PC-3 (cell line): ENCODE measurements at regions of chr14 and their contacts with region 1.

Region 1: DNA sequence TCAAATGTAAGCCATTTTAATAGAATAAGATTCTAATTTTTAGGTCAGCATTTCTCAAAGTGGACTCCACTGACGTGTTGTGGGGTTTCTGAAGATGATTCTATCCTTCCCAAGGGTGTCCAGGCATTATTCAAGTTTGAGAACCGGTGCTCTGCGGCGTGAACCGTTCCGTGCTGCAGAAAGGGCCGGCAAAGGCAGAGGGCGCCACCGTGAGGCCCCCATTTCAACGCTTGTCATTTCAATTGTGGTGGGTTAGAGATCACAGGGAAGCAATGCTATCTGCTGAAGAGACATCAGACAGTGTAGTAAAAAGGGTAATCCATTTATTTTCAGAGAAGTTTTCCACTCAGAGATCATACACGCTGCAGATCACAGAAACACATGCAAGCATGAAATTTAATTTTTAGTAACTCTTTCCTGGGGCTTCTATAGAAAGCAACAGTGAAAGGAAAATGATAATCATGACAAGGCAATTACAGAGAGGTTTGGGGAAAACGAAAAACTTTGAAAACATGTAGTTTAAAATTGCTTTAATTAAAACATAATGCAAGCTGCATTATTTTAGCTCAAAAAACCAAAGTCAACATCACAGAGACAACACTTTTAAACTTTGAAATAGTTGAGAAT is 201.7 kb downstream of the EXOC5 start:
- DNase-seq: peak; percentile 79
- ATAC-seq: peak; percentile 94
- H3K4me3 ChIP-seq: no peak overlapping the region
- H3K27ac ChIP-seq: no peak overlapping the region
- H3K4me1 ChIP-seq: no peaks in the 10 kb centered on the region
- H3K27me3 ChIP-seq: peaks cover 88% of the 10 kb centered on the region
- CTCF ChIP-seq: peak; percentile 99

Region 2: GRCh38 chr14:55689981-55690863 is 1376.8 kb before region 1 on chr14:
- CTCF ChIA-PET with region 1: no interaction called
- POLR2A ChIA-PET with region 1: interaction called, 15 read pairs
- intact Hi-C with region 1: no loop called
- DNase-seq: peak; percentile 83
- ATAC-seq: peak; percentile 73
- H3K4me3 ChIP-seq: peak overlapping the region; percentile 7; the same call in 1 of the 2 replicates
- H3K27ac ChIP-seq: peak overlapping the region; percentile 51
- H3K4me1 ChIP-seq: peaks cover 47% of the 10 kb centered on the region
- H3K27me3 ChIP-seq: no peaks in the 10 kb centered on the region
- CTCF ChIP-seq: no peak

Region 3: GRCh38 chr14:57189070-57189469 is 122.1 kb after region 1 on chr14:
- CTCF ChIA-PET with region 1: no interaction called
- POLR2A ChIA-PET with region 1: no interaction called
- intact Hi-C with region 1: loop called (anchors 5 kb)
- DNase-seq: peak; percentile 67
- ATAC-seq: peak; percentile 69
- H3K4me3 ChIP-seq: no peak overlapping the region
- H3K27ac ChIP-seq: no peak overlapping the region
- H3K4me1 ChIP-seq: no peaks in the 10 kb centered on the region
- H3K27me3 ChIP-seq: peaks cover 86% of the 10 kb centered on the region
- CTCF ChIP-seq: peak; percentile 77

Region 4: DNA sequence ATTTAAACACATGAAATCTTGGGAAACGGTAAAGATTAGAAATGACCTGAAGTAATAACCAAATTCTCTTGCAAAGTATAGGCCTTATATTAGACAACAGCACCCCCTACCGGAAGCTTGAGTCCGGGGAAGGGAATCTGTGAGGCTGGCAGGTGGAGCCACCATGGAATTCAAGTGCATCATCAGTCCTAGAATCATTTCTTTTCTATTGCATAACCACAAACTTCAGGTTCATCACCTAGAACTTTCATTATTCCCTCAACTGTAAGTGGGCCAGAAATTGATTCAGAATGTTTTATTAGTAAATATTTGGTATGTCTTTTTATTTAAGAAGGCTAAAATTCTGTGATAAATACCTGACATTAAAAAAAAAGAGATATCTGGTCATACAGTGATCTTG is 250.3 kb after region 1 on chr14:
- CTCF ChIA-PET with region 1: no interaction called
- POLR2A ChIA-PET with region 1: no interaction called
- intact Hi-C with region 1: loop called (anchors 1 kb)
- DNase-seq: peak; percentile 99
- ATAC-seq: peak; percentile 89
- H3K4me3 ChIP-seq: no peak overlapping the region
- H3K27ac ChIP-seq: no peak overlapping the region
- H3K4me1 ChIP-seq: no peaks in the 10 kb centered on the region
- H3K27me3 ChIP-seq: peaks cover 44% of the 10 kb centered on the region
- CTCF ChIP-seq: peak; percentile 100

Region 5: DNA sequence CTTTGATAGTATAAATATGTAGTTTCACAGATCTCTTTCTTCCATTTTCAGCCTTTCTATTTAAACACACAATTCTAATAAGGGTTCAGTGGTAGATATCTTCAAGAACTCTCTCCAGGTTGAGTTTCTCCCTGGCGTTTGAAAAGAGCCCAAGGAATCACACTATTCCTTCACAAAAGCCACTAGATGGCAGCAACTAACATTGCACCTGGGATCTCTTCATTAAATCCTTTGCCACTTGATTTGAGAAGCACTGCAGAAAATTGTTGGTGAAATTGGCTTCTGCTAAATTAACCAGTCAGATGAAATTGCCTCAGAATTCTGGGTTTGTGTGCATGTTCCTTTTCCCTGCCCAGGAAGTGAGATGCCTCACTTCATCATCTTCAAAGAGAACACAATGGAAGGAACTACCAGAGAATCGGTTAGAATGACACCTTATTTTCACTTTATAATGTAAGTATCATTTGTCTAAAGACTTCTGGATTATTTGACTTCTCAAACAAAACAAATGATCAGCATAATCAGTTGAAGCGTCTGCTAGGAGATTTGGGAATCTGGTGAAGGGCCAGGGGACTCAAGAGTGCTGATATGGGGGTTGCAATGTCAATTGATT is 419.9 kb after region 1 on chr14:
- CTCF ChIA-PET with region 1: no interaction called
- POLR2A ChIA-PET with region 1: no interaction called
- intact Hi-C with region 1: no loop called
- DNase-seq: peak; percentile 86
- ATAC-seq: peak; percentile 89
- H3K4me3 ChIP-seq: no peak overlapping the region
- H3K27ac ChIP-seq: no peak overlapping the region
- H3K4me1 ChIP-seq: no peaks in the 10 kb centered on the region
- H3K27me3 ChIP-seq: peaks cover 54% of the 10 kb centered on the region
- CTCF ChIP-seq: peak; percentile 99